Kidney (tissue), 22 donors: ENCODE measurements at regions of chr15 and their contacts with region 1.

Region 1: GRCh38 chr15:99282121-99282520 is 30.8 kb downstream of the LRRC28 start:
- DNase-seq: no peak
- H3K4me3 ChIP-seq: no peak overlapping the region
- H3K27ac ChIP-seq: no peak overlapping the region
- H3K4me1 ChIP-seq: peaks cover 0 to 4% (median 0%) of the 10 kb centered on the region in 3 donors
- H3K27me3 ChIP-seq: no peaks in the 10 kb centered on the region
- CTCF ChIP-seq: no peak

Region 2: GRCh38 chr15:99341786-99342185 is 59.7 kb after region 1 on chr15:
- intact Hi-C with region 1: no loop called
- DNase-seq: no peak
- H3K4me3 ChIP-seq: no peak overlapping the region
- H3K27ac ChIP-seq: no peak overlapping the region
- H3K4me1 ChIP-seq: peaks cover 0 to 17% (median 2%) of the 10 kb centered on the region in 3 donors
- H3K27me3 ChIP-seq: no peaks in the 10 kb centered on the region
- CTCF ChIP-seq: no peak

Region 3: DNA sequence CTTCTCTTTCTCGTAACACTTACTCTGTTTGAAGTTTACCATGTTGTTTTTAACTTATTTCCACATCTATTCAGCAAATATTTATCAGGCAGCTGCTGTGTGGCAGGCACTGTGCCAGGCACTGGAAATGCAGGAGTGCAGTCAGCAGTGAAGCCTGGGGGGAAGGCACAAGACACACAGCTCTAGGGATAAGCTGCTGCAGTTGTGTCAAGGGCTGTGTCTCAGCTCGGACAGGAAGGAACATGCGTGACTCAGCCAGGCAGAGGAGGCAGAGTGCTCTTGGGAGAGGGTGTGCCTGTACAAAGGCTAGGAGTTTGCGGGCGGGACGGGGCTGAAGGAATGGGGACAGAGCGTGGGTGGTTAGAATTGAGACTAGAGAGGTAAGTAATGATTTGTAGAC is 426.4 kb after region 1 on chr15:
- intact Hi-C with region 1: loop called (anchors 5 kb)
- DNase-seq: peak in 2 of 5 donors; percentile 38 to 93
- H3K4me3 ChIP-seq: no peak overlapping the region
- H3K27ac ChIP-seq: no peak overlapping the region
- H3K4me1 ChIP-seq: peaks cover 0 to 16% (median 14%) of the 10 kb centered on the region in 3 donors
- H3K27me3 ChIP-seq: no peaks in the 10 kb centered on the region
- CTCF ChIP-seq: no peak